SK-N-SH (cell line): ENCODE measurements at regions of chr7 and their contacts with region 1.

Region 1: DNA sequence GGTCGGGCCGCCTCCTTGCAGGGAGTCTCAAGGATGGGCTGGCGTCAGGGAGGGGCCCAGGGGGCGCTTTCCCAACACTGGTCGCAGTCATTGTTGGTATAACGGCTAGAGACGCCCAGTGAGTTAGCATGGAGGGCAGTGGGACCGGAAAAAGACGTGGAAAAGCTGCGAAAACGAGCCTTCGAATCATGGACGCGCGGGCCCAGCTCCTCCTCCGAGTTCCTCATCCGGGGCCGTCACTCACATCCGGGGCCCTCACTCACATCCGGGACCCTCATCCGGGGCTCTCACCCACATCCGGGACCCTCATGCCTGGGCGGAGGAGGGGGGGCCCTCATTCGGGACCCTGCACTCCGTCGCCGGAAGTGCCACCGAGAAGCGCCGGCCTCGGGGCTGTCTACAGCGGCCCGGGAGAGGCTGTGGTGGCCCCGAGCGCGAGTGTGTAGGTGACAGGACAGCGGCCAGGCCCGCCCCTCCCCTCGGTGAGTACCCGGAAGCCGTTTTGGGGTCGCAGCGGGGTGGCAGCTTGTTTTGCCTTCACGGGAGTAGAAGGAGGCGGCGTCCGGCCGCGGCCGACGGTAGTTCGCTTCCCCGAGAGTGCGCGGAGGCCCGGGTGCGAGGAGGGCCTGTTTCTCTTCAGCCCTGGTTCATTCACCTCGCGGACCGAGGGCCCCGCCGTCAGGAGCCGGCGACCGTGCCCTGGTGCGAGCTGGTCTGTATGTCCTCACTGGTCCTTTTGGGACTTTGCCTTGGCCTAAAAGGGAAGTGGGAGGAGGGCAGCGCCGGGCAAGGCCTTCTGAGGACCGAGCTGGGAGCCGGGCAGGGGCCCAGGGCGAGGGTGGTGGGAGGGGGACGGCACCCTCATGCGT is at the start of gene ZNF655:
- DNase-seq: peak; percentile 100
- H3K4me3 ChIP-seq: peak within 1 kb of the TSS; percentile 88 to 98
- H3K27ac ChIP-seq: peak within 1 kb of the TSS; percentile 97 to 99
- H3K4me1 ChIP-seq: peaks cover 20 to 34% of the 10 kb centered on the region in 2 experiments
- H3K27me3 ChIP-seq: no peaks in the 10 kb centered on the region
- CTCF ChIP-seq: no peak
- EP300 ChIP-seq: peak; percentile 17 to 65; a peak in 2 of 4 replicates
- RAD21 ChIP-seq: no peak
- polyA plus RNA-seq, gene ZNF655: 113 and 144 TPM in 2 replicates

Region 2: DNA sequence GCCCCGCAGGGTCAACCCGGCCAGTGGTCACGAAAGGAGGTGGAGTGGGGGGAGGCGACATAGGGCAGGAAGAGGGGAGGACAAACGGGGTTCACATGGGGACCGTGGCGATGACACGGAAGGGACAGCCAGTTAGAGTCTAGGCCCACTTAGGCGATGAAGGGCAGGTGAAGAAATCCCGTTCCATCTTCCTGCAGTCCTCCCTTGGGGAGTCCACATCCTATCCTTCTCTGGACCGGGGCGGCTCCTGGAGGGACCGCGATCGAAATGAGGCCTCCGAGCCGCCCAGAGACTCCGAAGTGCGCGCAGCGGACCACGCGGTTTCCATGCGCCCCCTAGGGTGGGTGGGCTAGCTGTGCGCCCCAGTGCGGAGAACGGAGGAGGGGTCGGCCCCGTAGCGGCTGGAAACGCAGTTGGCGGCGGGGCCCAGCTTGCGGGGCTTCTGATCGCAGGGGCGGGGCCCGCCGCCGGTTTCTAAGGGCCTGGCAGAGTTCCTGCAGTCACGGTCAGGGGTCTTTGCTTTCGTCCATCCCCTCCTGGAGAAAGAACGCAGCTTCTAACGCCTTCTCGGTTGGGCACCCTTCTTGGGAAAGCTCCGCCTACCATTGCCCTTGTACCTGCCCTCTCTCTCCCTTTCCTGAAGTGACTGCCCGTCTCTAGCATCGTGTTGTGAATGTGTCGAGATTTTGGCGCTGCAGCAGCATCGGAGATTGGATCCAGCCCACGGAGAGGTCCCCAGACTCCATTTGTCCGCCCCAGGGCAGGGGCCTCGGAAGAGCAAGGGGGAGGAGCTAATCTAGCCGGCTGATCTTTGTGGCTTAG is 21.6 kb after region 1 on chr7:
- CTCF ChIA-PET with region 1: interaction called, 12 read pairs
- POLR2A ChIA-PET with region 1: interaction called, 23 read pairs
- DNase-seq: peak; percentile 91
- H3K4me3 ChIP-seq: peak overlapping the region; percentile 58 to 70
- H3K27ac ChIP-seq: peak overlapping the region in 1 of 2 experiments; percentile 71; a peak in 2 of 4 replicates
- H3K4me1 ChIP-seq: peaks cover 4 to 11% of the 10 kb centered on the region in 2 experiments; a peak in 2 of 4 replicates
- H3K27me3 ChIP-seq: no peaks in the 10 kb centered on the region
- CTCF ChIP-seq: peak; percentile 62
- EP300 ChIP-seq: no peak
- RAD21 ChIP-seq: peak; percentile 64